SK-N-SH (cell line): ENCODE measurements at regions of chr22 and their contacts with region 1.

Region 1: DNA sequence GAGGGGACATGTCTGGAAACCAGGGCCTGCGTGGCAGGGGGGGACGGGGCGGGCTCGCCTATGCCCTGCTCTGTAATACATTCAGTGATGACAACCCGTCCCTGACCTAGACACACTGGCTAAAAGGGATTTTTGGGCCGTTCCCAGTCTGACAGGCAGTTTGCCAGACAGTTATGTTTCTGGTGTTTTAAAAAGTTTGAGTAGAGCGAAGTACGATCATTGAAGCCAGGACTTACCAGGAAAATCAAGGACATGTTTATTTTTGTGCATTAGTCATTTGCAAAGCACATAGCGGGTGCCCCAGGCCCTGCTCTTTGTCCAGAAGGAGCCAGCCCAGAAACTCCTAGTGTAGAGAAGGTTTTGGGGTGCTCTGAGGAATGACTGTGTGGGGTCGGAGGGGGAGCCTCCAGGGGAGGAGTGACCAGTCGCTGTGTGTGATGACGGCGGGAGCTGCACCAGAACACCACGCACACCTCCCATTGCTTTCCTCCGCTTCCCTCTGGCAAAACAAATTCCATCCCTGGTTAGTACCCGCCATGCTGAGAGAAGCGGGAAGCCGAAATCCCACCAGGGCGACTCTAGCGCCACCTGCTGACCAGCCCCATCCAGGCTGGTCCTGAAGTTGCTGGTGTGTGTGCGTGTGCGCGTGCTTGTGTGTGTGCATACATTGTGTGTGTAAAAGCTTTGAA is 50.8 kb downstream of the FBLN1 start:
- DNase-seq: peak; percentile 95
- H3K4me3 ChIP-seq: peak overlapping the region in 1 of 2 experiments; percentile 28; a peak in 1 of 4 replicates
- H3K27ac ChIP-seq: peak overlapping the region; percentile 59 to 82
- H3K4me1 ChIP-seq: peaks cover 0 to 18% of the 10 kb centered on the region in 2 experiments; a peak in 1 of 4 replicates
- H3K27me3 ChIP-seq: no peaks in the 10 kb centered on the region
- CTCF ChIP-seq: peak; percentile 98
- EP300 ChIP-seq: no peak
- RAD21 ChIP-seq: peak; percentile 98

Region 2: GRCh38 chr22:45441138-45441537 is 112.4 kb before region 1 on chr22:
- CTCF ChIA-PET with region 1: interaction called, 108 read pairs
- POLR2A ChIA-PET with region 1: interaction called, 6 read pairs
- DNase-seq: peak; percentile 70
- H3K4me3 ChIP-seq: no peak overlapping the region
- H3K27ac ChIP-seq: no peak overlapping the region
- H3K4me1 ChIP-seq: peaks cover 0 to 6% of the 10 kb centered on the region in 2 experiments; a peak in 1 of 4 replicates
- H3K27me3 ChIP-seq: no peaks in the 10 kb centered on the region
- CTCF ChIP-seq: peak; percentile 81
- EP300 ChIP-seq: no peak
- RAD21 ChIP-seq: peak; percentile 71

Region 3: DNA sequence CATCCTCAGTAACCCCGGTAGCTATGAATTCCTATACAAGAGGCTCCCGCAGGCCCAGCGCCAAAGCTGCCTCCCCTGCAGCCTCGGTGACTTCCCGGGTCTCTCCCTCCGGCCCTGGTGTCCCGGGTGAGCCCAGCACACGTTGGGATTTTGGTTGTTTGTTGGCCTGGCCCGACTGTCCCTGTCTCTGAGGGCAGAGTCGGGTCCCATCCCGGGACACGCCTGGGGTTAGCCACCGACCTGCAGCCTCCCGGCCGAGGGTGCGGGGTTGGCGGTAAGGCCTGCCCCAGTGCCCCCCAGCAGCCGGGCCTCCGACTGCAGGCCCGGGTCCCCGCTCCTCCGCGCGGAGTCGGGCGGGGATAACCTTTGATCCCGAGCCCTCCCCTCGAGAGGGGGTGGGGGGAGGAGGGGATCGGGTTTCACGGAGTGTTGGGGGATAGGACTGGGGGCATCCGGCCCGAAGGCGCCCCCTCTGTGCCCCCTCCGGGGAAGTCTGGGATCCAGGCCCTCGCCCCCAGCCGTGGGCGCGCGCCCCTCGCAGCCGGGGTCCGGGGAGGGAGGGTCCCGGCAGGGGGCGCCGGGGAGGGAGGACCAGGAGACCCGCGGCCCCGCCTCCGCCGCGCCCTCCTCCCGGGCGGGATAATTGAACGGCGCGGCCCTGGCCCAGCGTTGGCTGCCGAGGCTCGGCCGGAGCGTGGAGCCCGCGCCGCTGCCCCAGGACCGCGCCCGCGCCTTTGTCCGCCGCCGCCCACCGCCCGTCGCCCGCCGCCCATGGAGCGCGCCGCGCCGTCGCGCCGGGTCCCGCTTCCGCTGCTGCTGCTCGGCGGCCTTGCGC is 51.1 kb before region 1 on chr22 and contains the start of gene FBLN1:
- CTCF ChIA-PET with region 1: interaction called, 23 read pairs
- POLR2A ChIA-PET with region 1: no interaction called
- DNase-seq: peak; percentile 97
- H3K4me3 ChIP-seq: peak within 1 kb of the TSS; percentile 77
- H3K27ac ChIP-seq: peak within 1 kb of the TSS; percentile 65 to 91
- H3K4me1 ChIP-seq: peaks cover 17 to 43% of the 10 kb centered on the region in 2 experiments
- H3K27me3 ChIP-seq: no peaks in the 10 kb centered on the region
- CTCF ChIP-seq: peak; percentile 54
- EP300 ChIP-seq: no peak
- RAD21 ChIP-seq: no peak
- polyA plus RNA-seq, gene FBLN1: 94.8 and 147 TPM in 2 replicates

Region 4: GRCh38 chr22:45534339-45535192 is 18.9 kb before region 1 on chr22:
- CTCF ChIA-PET with region 1: interaction called, 21 read pairs
- POLR2A ChIA-PET with region 1: no interaction called
- DNase-seq: no peak
- H3K4me3 ChIP-seq: no peak overlapping the region
- H3K27ac ChIP-seq: no peak overlapping the region; a peak in 1 of 4 replicates
- H3K4me1 ChIP-seq: peaks cover 21 to 40% of the 10 kb centered on the region in 2 experiments; a peak in 2 of 4 replicates
- H3K27me3 ChIP-seq: no peaks in the 10 kb centered on the region
- CTCF ChIP-seq: no peak
- EP300 ChIP-seq: no peak
- RAD21 ChIP-seq: no peak

Region 5: DNA sequence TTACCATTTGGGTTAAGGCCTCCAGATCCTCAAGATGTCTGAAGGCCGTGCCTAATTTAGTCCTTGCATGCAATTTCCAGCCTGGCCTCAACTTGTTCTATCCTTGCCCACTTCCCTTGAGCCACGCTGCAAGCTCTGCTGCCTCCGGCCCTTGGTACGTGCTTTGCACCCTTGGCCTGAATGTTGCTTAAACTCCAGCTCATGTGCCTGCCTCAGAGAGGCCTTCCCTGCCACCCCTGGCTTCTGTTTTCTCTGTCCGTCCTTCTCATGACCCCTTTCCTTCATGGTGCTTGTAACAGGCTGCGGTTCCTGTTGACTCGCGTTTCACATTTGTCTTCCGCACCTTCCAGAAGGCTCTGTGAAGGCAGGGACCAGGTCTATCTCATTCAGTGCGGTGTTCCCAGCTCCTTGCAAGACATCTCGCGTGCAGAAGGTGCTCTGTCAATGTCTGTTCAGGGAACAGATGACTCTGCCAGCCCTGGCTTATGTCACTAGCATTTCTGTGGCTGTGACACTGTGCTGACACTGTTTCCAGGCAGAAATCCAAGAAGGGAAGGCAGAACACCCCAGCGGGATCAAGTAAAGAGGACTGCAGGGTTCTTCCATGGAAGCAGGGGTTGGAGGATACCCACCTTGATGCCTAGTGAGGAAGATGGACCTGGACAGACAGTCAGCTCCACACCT is 11.0 kb after region 1 on chr22:
- CTCF ChIA-PET with region 1: interaction called, 34 read pairs
- POLR2A ChIA-PET with region 1: no interaction called
- DNase-seq: no peak
- H3K4me3 ChIP-seq: no peak overlapping the region
- H3K27ac ChIP-seq: no peak overlapping the region; a peak in 1 of 4 replicates
- H3K4me1 ChIP-seq: peaks cover 0 to 8% of the 10 kb centered on the region in 2 experiments; a peak in 1 of 4 replicates
- H3K27me3 ChIP-seq: no peaks in the 10 kb centered on the region
- CTCF ChIP-seq: no peak
- EP300 ChIP-seq: no peak
- RAD21 ChIP-seq: no peak

Region 6: DNA sequence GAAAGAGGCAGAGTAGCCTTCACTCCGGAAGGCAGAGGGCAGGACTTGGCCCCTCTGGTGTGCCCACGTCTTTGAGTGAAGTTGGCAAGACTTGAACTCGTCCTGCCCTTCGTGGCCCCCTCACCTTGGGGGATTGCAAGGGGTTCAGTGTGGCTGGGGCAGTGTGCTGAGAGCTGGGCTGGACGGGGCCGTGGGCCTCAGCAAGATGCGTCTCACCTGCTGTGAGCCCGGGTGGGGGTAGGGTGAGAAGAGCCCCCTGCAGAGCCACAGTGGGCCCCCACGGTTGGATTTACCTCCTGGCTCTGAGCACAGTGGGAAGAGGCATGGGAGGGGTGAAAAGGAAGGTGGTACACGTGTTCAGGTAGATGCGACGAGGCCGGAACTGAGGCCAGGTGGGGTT is 36.8 kb after region 1 on chr22:
- CTCF ChIA-PET with region 1: no interaction called
- POLR2A ChIA-PET with region 1: no interaction called
- DNase-seq: no peak
- H3K4me3 ChIP-seq: no peak overlapping the region
- H3K27ac ChIP-seq: no peak overlapping the region
- H3K4me1 ChIP-seq: no peaks in the 10 kb centered on the region
- H3K27me3 ChIP-seq: no peaks in the 10 kb centered on the region
- CTCF ChIP-seq: no peak
- EP300 ChIP-seq: no peak
- RAD21 ChIP-seq: no peak